ENCODE measurements at regions of chr18 and their contacts with region 1.

Region 1: GRCh38 chr18:11733031-11733430 is 44.0 kb downstream of the GNAL start:
- DNase-seq: peak; percentile 70
- H3K27ac ChIP-seq: no peak overlapping the region
- CTCF ChIP-seq: peak; percentile 92

Region 2: DNA sequence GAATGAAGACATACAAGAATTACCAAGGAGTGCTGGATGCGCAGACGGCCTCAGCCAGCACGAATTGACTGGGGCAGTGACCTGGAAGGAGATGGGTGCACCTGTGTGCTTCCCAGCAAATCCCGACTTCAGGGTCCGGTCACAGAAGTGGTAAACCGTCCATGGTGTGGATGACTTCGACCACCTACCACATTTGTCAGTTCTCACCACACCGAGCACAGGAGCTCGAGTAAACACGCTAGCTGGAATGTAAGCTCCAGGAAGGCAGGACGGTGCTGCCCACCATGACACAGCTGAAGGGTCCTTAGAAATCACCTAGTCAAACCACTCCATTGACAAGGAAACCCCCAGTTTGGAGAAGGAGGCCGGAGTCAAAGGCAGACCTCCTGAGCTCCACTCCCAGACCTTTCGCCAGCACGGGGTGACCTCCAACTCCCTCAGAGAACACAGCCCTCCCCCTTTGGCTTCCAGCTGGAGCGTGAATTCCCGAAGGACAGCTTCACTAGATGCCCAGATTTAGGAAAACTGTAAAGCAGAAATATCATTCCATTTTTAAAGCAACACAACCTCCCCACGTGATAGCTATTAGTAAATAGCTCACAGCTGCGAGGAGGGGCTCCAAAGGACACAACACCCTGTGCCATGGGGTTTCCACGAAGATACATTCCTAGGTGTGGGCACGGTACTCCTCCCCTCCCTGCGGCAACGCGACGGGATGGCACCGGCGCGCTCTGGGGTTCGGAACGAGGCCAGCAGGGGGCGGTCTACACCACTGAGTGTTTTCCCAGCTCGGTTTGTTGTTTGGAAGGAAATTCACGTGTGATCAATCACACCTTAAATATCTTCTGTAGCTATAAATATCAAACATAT is 78.1 kb before region 1 on chr18:
- CTCF ChIA-PET with region 1: interaction called, 64 read pairs
- POLR2A ChIA-PET with region 1: interaction called, 5 read pairs
- DNase-seq: peak; percentile 80
- H3K27ac ChIP-seq: no peak overlapping the region
- CTCF ChIP-seq: peak; percentile 64

Region 3: GRCh38 chr18:11872479-11873136 is 139.6 kb after region 1 on chr18:
- CTCF ChIA-PET with region 1: interaction called, 11 read pairs
- POLR2A ChIA-PET with region 1: no interaction called
- DNase-seq: peak; percentile 73
- H3K27ac ChIP-seq: no peak overlapping the region
- CTCF ChIP-seq: peak; percentile 55

Region 4: GRCh38 chr18:11980555-11981382 is 247.7 kb after region 1 on chr18:
- CTCF ChIA-PET with region 1: no interaction called
- POLR2A ChIA-PET with region 1: no interaction called
- DNase-seq: peak; percentile 99
- H3K27ac ChIP-seq: peak overlapping the region; percentile 96
- CTCF ChIP-seq: no peak

Measured in RWPE1 (cell line).